ENCODE measurements at regions of chr17 and their contacts with region 1.

Region 1: DNA sequence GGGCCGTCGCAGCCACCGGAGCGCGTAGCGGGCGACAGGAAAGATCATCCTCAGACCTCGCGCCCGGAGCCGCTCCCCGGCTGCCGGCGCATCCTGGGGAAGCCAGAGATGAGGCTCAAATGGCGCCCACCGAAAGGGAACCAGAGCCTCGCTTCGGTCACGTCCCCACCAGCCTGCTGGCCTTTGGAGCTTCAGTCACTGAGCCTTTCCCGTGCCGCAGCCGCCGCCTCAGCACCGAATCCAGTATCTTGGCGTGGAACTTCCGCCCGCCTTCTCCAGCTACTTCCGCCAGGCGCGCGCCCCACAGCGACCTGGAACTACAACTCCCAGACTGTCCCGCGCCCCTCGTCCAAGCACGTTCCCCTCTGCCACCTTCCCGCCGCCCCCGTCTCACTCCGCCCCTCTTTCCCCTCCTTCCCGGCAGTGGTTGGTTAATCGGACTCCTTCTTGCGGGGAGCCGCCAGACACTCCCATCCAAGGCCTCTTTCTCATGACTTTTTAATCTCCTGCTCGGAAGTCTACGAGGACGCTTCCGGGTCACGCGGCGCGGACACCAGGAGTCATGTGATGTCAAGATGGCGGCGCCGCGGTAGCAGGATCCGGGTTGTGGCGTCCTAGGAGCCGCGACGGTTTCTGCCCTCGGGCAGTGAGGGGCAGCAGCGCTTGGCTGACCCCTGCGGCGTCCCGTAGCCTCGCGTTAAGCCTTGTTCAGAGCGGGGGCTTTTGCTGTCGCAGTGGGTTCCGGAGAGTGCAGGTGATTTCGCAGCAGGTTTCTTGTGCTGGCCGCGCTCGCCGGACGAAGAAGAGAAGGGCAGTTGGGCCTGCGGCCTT is at the starts of genes SMCR8 and TOP3A:
- DNase-seq: peak; percentile 96 to 99
- H3K4me3 ChIP-seq: peak within 1 kb of the TSS; percentile 84
- H3K27ac ChIP-seq: peak within 1 kb of the TSS; percentile 73
- H3K4me1 ChIP-seq: peaks cover 42% of the 10 kb centered on the region
- H3K27me3 ChIP-seq: no peaks in the 10 kb centered on the region
- CTCF ChIP-seq: no peak
- total RNA-seq, gene SMCR8: 19.5 and 23.8 TPM in 2 replicates
- total RNA-seq, gene TOP3A: 51.2 and 52.2 TPM in 2 replicates

Region 2: GRCh38 chr17:18187821-18188761 is 126.9 kb before region 1 on chr17:
- CTCF ChIA-PET with region 1: no interaction called
- POLR2A ChIA-PET with region 1: no interaction called
- intact Hi-C with region 1: no loop called
- DNase-seq: no peak
- H3K4me3 ChIP-seq: no peak overlapping the region
- H3K27ac ChIP-seq: no peak overlapping the region
- H3K4me1 ChIP-seq: peaks cover 28% of the 10 kb centered on the region
- H3K27me3 ChIP-seq: no peaks in the 10 kb centered on the region
- CTCF ChIP-seq: no peak

Region 3: GRCh38 chr17:18225121-18225566 is 89.8 kb before region 1 on chr17:
- CTCF ChIA-PET with region 1: no interaction called
- POLR2A ChIA-PET with region 1: no interaction called
- intact Hi-C with region 1: loop called (anchors 10 kb)
- DNase-seq: peak; percentile 79 to 98
- H3K4me3 ChIP-seq: peak overlapping the region; percentile 55
- H3K27ac ChIP-seq: no peak overlapping the region
- H3K4me1 ChIP-seq: peaks cover 25% of the 10 kb centered on the region
- H3K27me3 ChIP-seq: no peaks in the 10 kb centered on the region
- CTCF ChIP-seq: no peak

Region 4: GRCh38 chr17:18248300-18248731 is 66.6 kb before region 1 on chr17:
- CTCF ChIA-PET with region 1: no interaction called
- POLR2A ChIA-PET with region 1: no interaction called
- intact Hi-C with region 1: loop called (anchors 2 kb)
- DNase-seq: peak; percentile 54 to 75
- H3K4me3 ChIP-seq: no peak overlapping the region
- H3K27ac ChIP-seq: no peak overlapping the region
- H3K4me1 ChIP-seq: no peaks in the 10 kb centered on the region
- H3K27me3 ChIP-seq: no peaks in the 10 kb centered on the region
- CTCF ChIP-seq: peak; percentile 85

Region 5: DNA sequence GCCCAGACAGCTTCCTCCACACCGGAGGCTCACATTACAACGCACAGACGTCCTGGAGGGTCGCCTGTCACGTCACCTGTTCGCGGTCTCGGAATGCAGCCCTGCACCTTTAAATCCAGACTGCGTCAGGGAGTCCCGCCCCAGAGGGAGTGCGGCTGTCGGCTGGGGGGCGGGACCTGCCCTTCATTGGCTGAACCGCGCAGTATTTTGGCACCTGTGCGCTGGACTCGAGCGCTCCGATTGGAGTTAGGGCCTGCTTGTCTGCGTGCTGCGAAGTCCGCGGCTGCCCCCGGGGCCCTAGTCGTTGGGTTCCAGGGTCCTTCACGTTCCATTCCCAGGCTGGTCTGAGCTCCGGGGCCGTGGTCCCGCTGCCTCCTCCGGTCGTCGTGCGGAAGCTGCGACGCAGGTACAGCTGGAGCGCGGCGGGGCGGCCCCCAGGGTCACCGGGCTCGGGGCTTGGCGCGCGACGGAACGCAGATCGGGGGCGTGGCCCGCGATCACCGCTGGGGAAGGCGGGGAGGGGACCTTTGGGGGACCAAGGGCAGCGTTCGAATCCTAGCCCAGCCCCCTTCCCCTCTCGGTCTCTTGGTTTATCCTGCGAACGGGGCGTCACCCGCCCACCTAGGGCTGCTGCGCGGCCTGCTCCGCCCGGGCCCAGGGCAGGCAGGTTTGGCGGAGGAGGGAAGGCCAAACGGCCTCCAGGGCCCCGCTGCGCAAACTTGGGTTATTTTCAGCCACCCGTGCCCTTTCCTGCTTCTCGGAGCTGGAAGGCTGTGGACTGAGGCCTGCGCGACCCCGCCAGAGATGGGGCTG is 54.4 kb before region 1 on chr17 and contains the start of gene MIEF2:
- CTCF ChIA-PET with region 1: no interaction called
- POLR2A ChIA-PET with region 1: no interaction called
- intact Hi-C with region 1: loop called (anchors 1 kb)
- DNase-seq: peak; percentile 93 to 98
- H3K4me3 ChIP-seq: peak within 1 kb of the TSS; percentile 84
- H3K27ac ChIP-seq: peak within 1 kb of the TSS; percentile 96
- H3K4me1 ChIP-seq: peaks cover 39% of the 10 kb centered on the region
- H3K27me3 ChIP-seq: no peaks in the 10 kb centered on the region
- CTCF ChIP-seq: no peak
- total RNA-seq, gene MIEF2: 29.6 and 33.0 TPM in 2 replicates

Region 6: DNA sequence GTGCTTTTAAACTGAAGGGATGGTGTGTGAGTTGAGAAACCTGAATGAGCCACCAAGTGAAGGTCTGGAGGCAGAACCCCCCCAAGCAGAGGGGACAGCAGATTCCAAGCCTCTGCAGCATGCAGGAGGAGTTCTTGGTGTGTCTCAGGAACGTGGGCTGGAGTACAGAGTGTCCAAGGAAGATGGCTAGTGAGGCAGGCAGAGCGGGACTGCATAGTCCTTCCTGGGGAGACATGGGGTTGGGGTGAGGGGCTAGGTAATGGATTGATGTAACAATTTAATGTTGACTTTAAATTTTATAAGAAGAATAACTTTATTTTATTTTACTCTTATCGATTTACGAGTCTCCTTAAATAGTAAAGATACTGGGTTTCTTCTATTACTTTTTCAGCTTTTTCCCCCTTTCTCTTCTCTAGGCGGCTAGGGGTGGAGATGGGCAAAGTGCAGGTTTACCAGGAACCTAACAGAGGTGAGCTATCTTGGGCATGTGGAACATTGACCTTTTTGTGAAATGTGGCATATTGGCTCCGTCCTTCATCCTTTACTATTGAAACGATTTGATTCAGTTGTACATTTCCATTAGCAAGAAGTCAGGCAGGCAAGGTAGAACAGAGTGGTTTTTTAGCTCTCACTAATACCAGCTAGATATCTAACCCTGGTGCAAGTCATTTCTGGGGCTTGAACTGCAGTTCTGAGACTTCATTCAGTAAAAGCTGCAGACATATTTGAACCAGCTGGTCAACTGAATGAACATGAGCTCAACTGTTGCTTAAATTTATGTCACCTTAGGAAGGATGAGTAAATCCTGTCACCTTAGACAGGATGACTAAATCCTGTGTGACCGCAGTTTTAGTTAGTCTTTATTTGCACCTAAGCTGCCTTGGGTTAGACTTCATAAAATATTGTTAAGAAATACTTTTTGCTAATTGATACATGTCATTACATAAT is 552.2 kb after region 1 on chr17:
- CTCF ChIA-PET with region 1: no interaction called
- POLR2A ChIA-PET with region 1: interaction called, 30 read pairs
- intact Hi-C with region 1: no loop called
- DNase-seq: no peak
- H3K4me3 ChIP-seq: no peak overlapping the region
- H3K27ac ChIP-seq: no peak overlapping the region
- H3K4me1 ChIP-seq: no peaks in the 10 kb centered on the region
- H3K27me3 ChIP-seq: no peaks in the 10 kb centered on the region
- CTCF ChIP-seq: no peak